ENCODE measurements at regions of chr6 and their contacts with region 1.

Region 1: GRCh38 chr6:166775180-166776081 is 148.4 kb upstream of the RPS6KA2 start:
- DNase-seq: peak in 2 of 4 donors; percentile 59 to 78
- ATAC-seq: peak; percentile 92
- H3K4me3 ChIP-seq: no peak overlapping the region
- H3K27ac ChIP-seq: no peak overlapping the region
- H3K4me1 ChIP-seq: peaks cover 0 to 4% of the 10 kb centered on the region in 2 donors
- H3K27me3 ChIP-seq: peaks cover 0 to 11% of the 10 kb centered on the region in 2 donors
- CTCF ChIP-seq: peak; percentile 78 to 83

Region 2: DNA sequence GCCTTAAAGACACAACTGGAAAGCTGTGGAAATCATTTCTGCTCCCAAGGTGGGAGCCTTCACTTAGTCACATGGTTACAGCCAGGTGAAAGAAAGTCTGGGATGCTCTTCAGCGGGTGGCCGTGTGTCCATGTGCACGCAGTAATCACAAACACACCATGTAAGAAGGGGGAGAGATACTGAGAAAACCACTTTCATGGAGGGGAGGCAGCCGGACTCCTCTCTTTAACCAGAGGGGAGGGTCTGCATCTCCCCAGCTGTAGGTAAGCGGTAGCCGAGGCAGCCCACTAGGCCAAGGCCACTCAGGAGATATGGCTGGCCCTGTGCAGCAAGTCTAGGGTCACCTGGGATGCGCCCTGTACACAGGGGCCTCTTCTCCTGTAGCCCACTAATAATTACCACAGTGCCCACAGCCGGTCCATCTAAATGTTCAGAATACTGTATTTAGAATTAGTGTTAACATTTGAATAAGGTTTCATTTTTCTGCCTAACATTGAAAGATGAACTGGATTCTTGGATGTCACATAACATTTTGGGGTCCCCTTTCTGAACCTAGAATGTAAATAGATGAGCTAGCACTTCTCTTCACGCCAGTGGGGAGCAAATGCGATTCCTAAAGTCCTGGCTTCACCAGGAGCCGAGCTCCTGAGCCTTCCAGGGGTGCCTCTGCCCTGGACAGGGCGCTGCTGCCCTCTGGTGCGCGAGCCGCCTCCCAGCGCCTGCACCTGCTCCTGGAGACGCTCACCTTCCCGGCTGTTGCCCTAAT is 366.4 kb after region 1 on chr6:
- intact Hi-C with region 1: loop called in 1 of 2 experiments (anchors 10 kb)
- DNase-seq: peak in 3 of 4 donors; percentile 44 to 92 (median 61)
- ATAC-seq: peak; percentile 95
- H3K4me3 ChIP-seq: no peak overlapping the region
- H3K27ac ChIP-seq: no peak overlapping the region
- H3K4me1 ChIP-seq: no peaks in the 10 kb centered on the region
- H3K27me3 ChIP-seq: peaks cover 0 to 17% of the 10 kb centered on the region in 2 donors
- CTCF ChIP-seq: peak; percentile 62 to 67